Mammary epithelial cell (primary cell): ENCODE measurements at regions of chr11 and their contacts with region 1.

Region 1: DNA sequence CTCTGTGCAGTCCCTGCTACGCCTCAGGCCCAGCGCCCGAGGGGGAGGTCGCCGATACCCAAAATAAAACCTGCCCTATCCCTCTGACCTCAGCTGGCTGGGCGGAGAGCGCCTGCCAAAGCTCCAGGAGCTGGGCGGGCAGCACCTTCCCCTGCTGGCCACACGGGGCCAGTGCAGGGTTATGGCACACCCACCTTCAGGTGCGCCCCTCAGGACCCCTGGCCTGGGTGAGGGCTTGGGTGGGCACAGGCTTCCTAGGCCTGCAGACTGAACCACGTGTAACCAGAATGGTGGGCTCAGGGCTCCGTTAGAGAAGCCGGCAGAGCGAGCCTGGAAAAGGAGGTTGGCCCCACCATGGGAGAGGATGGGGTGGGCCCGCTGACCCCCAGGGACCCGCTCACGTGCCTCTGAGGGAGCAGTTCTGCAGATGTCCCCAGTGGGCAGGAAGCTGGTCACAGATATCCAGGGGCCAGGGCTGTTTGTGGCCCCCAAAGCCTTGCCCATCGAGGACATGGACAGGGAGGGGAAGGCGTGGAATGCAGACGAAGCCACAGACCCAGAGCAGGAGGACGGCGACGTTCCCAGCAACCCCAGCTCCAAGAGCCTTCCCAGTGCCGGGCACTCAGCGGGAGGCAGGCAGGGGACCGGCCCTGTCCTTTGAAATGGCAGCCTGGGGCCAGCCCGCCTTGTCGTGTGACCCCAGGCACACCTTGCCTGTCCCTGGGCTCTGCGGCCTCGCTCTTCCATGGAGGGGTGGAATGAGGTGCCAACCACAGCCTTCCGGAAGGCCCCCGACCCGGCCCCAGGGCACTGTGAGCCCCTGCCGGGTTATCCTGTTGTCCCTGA is 1.6 kb upstream of the TNNT3 start:
- DNase-seq: no peak
- H3K4me3 ChIP-seq: no peak overlapping the region
- H3K27ac ChIP-seq: no peak overlapping the region
- H3K4me1 ChIP-seq: no peaks in the 10 kb centered on the region
- H3K27me3 ChIP-seq: no peaks in the 10 kb centered on the region
- CTCF ChIP-seq: peak in 1 of 2 donors; percentile 22

Region 2: DNA sequence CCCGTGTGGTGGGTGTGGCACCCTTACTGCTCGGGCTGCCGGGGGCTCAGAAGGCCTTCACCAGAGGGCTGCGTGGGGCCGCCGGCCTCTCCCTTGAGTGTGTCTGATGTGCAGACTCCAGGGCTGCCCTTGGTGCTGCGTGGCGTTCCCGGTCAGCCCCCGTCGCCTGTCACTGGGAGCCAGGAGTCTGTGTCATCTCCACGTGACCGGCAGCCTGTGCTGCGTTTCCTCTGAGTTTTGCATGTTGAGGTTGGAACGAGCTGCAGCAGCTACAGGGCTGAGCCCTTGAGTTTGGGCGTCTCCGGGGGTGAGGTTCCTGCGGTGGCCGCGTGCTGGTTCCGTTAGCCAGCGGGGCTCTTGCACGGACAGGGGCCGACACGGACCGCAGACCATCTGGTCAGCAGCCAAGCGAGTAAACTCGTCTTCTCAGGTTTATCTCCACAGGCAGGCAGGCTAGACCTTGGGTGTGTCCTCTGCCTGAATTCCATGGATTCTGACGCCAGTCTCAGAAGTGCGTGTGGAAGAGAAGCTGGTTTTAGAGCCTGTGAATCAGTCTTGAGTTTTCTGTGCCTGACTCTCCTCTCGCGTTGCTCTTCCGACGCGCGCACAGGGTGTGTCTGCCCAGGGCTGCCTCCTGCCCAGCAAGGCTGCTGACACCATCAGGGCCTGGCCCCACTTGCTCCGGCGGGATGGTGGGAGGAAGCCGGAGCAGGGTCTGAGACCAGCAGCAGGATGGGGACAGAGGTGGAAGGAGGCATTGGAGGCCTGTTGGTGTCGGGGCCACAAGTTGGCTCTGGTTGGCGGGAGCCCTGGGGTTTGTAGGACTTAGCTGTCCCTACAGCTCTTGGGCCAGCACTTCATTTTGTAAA is 1457.3 kb before region 1 on chr11:
- CTCF ChIA-PET with region 1: no interaction called
- dilution Hi-C with region 1: no loop called
- in situ Hi-C with region 1: no loop called
- intact Hi-C with region 1: no loop called
- DNase-seq: no peak
- H3K4me3 ChIP-seq: no peak overlapping the region
- H3K27ac ChIP-seq: no peak overlapping the region
- H3K4me1 ChIP-seq: no peaks in the 10 kb centered on the region
- H3K27me3 ChIP-seq: no peaks in the 10 kb centered on the region
- CTCF ChIP-seq: no peak

Region 3: DNA sequence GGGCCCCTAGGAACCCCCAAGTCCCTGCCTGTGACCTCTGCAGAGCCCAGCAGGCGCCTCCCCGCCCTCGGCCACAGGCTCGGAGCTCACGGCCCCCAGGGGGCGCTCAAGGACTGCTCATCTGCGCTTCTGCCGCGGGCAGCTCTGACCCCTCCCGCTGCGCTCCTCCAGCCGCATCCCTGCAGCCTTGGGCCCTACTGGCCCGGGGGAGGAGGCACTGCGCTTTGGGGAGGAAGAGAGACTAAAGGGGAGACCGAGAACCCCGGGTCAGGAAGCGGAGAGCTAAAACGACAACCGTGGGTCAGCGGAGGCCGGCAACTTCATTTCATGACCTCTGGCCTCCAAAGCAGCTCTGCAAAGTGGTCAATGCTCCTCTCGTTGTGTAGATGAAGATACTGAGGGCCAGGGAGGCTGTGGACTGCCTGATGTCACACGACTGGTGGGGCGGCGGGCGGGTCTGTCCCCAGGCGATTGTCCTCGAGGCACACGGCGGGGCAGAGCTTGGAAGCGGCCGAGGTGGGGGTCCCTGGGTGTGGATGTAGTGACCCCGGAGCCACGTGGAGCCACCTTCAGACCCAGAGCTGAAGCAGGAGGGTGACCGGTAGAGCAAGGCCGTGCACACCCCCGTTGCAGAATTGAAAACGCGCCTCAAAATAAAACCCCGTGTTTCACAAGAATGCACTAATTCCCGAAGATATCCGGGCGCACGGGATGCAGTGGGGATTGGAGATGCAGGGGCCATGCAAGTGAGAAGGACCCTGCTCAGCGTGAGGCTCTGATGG is 223.6 kb before region 1 on chr11:
- CTCF ChIA-PET with region 1: no interaction called
- dilution Hi-C with region 1: no loop called
- in situ Hi-C with region 1: no loop called
- intact Hi-C with region 1: loop called (anchors 1 kb)
- DNase-seq: peak; percentile 58
- H3K4me3 ChIP-seq: peak overlapping the region in 2 of 3 experiments; percentile 49 to 54
- H3K27ac ChIP-seq: no peak overlapping the region
- H3K4me1 ChIP-seq: peaks cover 14% of the 10 kb centered on the region
- H3K27me3 ChIP-seq: peaks cover 8% of the 10 kb centered on the region
- CTCF ChIP-seq: peak; percentile 72 to 92

Region 4: GRCh38 chr11:1882519-1883238 is 35.2 kb before region 1 on chr11:
- CTCF ChIA-PET with region 1: no interaction called
- dilution Hi-C with region 1: no loop called
- in situ Hi-C with region 1: no loop called
- intact Hi-C with region 1: loop called (anchors 5 kb)
- DNase-seq: peak; percentile 54
- H3K4me3 ChIP-seq: no peak overlapping the region
- H3K27ac ChIP-seq: no peak overlapping the region
- H3K4me1 ChIP-seq: no peaks in the 10 kb centered on the region
- H3K27me3 ChIP-seq: no peaks in the 10 kb centered on the region
- CTCF ChIP-seq: peak; percentile 76 to 94